ENCODE measurements at regions of chr22 and their contacts with region 1.

Region 1: GRCh38 chr22:21938071-21938822 is 14.4 kb downstream of the PPM1F start:
- DNase-seq: no peak
- H3K4me3 ChIP-seq: peak overlapping the region; percentile 61
- CTCF ChIP-seq: peak; percentile 97

Region 2: GRCh38 chr22:21707677-21708076 is 230.6 kb before region 1 on chr22:
- CTCF ChIA-PET with region 1: interaction called, 268 read pairs
- POLR2A ChIA-PET with region 1: no interaction called
- DNase-seq: no peak
- H3K4me3 ChIP-seq: no peak overlapping the region
- CTCF ChIP-seq: no peak

Region 3: GRCh38 chr22:21712894-21713712 is 225.1 kb before region 1 on chr22:
- CTCF ChIA-PET with region 1: interaction called, 268 read pairs
- POLR2A ChIA-PET with region 1: interaction called, 5 read pairs
- DNase-seq: no peak
- H3K4me3 ChIP-seq: peak overlapping the region; percentile 28
- CTCF ChIP-seq: peak; percentile 81

Region 4: DNA sequence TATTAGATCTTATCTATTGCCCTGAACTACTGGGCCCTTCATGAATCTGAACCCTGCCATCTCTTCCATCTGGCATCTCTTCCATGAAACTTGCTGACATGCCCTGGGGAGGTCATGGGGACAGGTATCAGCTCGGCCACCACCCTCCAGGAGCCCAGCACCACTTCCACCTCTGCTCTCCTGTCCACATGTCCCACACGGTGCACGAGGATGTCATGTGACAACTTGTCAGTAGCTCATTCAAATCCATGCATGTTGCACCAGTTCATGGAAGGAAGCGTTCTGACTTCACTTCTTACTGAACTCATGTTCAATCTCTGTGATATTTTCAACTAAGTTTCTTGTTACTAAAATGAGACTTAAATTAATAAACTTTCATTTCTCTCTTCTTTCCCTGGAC is 219.2 kb before region 1 on chr22:
- CTCF ChIA-PET with region 1: interaction called, 268 read pairs
- POLR2A ChIA-PET with region 1: interaction called, 5 read pairs
- DNase-seq: no peak
- H3K4me3 ChIP-seq: no peak overlapping the region
- CTCF ChIP-seq: no peak

Region 5: GRCh38 chr22:21921729-21922128 is 16.5 kb before region 1 on chr22:
- CTCF ChIA-PET with region 1: interaction called, 36 read pairs
- POLR2A ChIA-PET with region 1: no interaction called
- DNase-seq: no peak
- H3K4me3 ChIP-seq: no peak overlapping the region
- CTCF ChIP-seq: no peak

Region 6: GRCh38 chr22:21927174-21927823 is 10.9 kb before region 1 on chr22:
- CTCF ChIA-PET with region 1: interaction called, 36 read pairs
- POLR2A ChIA-PET with region 1: no interaction called
- DNase-seq: no peak
- H3K4me3 ChIP-seq: no peak overlapping the region
- CTCF ChIP-seq: no peak

Region 7: DNA sequence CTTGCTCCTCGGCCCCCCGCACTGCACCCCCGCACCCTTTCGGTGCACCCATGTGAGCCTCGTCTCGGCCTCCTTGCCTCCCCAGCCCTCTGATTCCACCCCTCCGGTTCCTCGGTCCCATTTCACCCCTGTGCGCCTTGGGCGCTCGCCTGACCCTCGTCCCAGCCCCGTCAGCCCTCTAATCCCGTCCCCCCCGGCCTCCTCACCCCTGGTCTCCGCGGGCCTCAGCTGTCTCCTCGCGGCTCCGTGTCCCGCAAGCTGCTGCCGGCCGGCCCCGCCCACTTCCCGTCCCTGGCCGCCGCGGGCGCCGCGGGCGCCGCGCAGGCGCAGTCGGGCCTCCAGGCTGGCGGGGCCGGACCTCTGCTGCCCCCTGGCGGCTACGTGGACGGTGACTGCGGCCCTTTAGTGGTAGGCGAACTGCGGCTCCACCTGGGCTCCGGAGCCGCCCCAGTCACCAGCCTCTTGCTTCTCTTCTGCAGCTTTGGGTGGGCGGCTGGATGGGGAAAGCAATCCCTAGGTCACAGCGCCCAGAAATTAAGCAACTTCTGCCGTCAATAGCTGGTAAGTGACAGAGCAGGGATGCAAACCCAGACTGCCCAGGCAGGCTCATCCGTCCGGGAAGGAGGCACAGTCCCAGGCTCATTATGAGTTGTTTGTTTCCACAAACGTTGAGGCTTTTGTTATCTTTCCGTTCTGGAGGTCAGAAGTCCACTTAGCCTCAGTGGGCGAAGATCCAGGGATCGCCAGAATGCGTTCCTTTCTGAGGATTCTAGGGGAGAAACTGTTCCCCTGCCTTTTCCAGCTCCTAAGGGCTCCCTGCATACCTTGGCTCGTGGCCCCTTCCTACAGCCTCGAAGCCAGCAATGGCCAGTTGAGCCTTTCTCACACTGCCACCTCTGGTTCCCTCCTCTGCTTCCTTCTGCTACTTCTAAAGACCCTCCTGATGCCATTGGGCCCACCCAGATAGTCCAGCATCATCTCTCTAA is 14.6 kb after region 1 on chr22 and contains the start of gene PPM1F:
- CTCF ChIA-PET with region 1: interaction called, 114 read pairs
- POLR2A ChIA-PET with region 1: interaction called, 6 read pairs
- DNase-seq: no peak
- H3K4me3 ChIP-seq: peak within 1 kb of the TSS; percentile 82
- CTCF ChIP-seq: peak; percentile 89